ENCODE measurements at regions of chr7 and their contacts with region 1.

Region 1: GRCh38 chr7:47088329-47089067 is 493.4 kb downstream of the TNS3 start:
- DNase-seq: peak; percentile 77
- ATAC-seq: peak; percentile 81

Region 2: DNA sequence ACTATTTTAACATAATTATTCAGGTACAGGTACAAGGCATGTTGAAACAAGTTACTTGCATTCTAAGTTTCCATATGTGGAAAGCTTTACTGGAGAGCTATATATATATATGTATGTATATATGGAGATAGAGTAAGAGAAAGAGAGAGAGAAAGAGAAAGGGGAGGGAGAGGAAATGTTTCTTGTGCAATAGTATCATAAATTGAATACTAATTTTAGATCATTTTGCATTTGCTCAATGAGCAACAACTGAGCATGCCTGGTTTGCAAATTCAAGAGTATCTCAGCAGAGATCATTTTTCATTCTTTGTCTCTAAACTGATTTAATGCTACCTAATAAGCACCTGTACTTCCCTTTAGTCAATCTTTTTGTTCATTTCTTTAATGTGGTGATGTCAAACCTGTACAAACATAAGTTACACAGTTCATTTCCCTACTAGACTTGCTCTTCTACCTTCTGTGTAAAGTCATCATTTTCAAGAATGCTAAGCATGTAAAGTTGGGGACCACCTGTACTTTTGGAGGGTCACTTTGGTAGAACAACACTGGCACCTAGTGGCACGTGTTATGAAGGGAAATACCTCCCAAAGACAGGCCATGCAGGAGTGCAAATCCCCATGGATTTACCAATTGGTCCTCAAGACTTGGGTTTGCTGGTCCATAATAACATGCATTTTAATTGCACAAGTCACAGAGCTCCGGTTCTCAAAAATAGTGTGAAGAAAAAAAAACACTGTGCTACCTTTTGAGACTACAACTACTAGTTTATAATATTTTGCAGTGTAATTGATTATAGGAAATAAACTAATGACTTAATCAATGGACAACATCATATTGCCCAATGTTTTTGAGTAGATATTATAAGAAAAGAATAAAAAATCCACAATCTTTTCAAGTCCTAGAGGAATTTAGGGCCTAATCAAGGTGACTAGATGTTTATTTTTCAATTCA is 736.2 kb before region 1 on chr7:
- intact Hi-C with region 1: loop called (anchors 5 kb)
- DNase-seq: no peak
- ATAC-seq: no peak

Region 3: DNA sequence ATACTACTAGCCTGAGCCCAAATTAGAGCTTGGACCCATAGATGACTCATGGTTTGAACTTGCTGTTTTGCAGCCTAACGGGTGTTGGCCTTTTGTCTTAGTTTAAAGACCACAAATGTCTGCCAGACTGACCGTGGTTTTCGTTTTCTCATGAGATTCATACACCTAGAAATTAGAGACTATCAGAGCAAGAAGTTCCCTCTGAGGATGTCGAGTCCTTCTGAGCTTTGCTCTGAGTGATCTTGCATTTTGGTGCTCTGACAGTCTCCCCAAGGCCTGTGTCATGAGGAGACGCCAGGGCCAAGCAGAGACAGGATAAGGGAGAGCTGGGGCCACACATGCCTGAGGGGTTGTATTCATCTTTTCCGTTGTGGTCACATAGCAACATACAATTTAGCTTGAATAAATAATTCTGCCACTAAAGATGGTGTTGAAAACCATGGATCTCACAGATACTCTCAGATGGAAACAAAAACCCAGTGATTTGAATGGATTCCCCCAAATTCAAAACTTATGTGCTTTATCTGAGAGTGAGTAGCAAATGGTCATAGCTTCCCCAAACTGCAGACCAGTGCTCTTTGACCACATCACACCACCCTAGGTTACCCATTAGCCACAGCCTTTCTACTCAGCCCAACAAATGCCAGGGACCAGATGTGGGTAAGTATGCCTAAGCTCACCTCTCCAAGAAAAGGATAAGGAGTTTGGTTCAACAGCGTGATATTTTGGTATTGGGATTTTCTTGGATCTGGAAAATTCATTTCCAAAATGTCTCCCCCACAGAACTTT is 405.5 kb before region 1 on chr7:
- intact Hi-C with region 1: loop called (anchors 10 kb)
- DNase-seq: no peak
- ATAC-seq: no peak

Region 4: GRCh38 chr7:46932676-46933424 is 155.6 kb before region 1 on chr7:
- intact Hi-C with region 1: loop called (anchors 5 kb)
- DNase-seq: peak; percentile 69
- ATAC-seq: peak; percentile 87

Region 5: GRCh38 chr7:46993396-46993795 is 95.1 kb before region 1 on chr7:
- intact Hi-C with region 1: no loop called
- DNase-seq: no peak
- ATAC-seq: no peak

Region 6: DNA sequence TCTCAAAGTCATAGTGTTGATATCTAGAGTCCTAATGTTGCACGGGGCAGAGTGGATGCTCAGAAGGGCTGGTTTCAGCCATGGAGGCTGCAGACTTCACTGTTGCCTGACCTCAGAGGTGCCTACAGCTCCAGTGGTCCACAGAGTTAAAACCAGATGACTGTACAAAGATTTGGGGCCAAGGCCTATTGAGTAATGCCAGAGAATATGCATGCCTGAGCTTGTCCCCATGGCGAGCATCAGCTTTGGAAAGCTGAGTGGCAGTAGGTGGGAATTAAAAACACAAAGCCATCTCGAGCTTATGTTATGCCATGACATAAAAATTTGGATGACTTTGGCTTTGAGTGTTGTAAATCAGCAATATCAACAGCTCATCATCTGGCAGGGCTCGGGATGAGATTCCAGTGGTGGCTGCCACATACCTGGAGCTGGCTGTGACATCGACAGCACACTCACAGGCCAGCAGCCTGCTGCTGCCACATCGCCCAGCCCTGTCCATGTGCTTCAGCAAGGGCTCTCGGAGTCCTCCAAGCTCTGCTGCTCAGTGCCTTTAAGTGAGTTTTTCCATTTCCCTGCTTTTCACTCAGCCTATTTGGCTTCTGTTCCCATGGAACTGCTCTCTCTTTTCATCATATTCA is 113.8 kb after region 1 on chr7:
- intact Hi-C with region 1: no loop called
- DNase-seq: no peak
- ATAC-seq: no peak